ENCODE measurements at regions of chr3 and their contacts with region 1.

Region 1: GRCh38 chr3:32570421-32571191 is at the start of gene DYNC1LI1:
- DNase-seq: peak; percentile 96
- H3K4me3 Mint-ChIP-seq: peak within 1 kb of the TSS; percentile 89
- H3K27ac Mint-ChIP-seq: peak within 1 kb of the TSS; percentile 90
- H3K4me1 Mint-ChIP-seq: peaks cover 27% of the 10 kb centered on the region
- H3K27me3 Mint-ChIP-seq: no peaks in the 10 kb centered on the region
- total RNA-seq, gene DYNC1LI1: 35.2 to 36.3 TPM

Region 2: GRCh38 chr3:32414520-32415202 is 155.9 kb before region 1 on chr3:
- CTCF ChIA-PET with region 1: no interaction called
- POLR2A ChIA-PET with region 1: no interaction called
- intact Hi-C with region 1: no loop called
- DNase-seq: peak; percentile 68
- H3K4me3 Mint-ChIP-seq: peak overlapping the region; percentile 49
- H3K27ac Mint-ChIP-seq: peak overlapping the region; percentile 94
- H3K4me1 Mint-ChIP-seq: peaks cover 65% of the 10 kb centered on the region
- H3K27me3 Mint-ChIP-seq: no peaks in the 10 kb centered on the region

Region 3: DNA sequence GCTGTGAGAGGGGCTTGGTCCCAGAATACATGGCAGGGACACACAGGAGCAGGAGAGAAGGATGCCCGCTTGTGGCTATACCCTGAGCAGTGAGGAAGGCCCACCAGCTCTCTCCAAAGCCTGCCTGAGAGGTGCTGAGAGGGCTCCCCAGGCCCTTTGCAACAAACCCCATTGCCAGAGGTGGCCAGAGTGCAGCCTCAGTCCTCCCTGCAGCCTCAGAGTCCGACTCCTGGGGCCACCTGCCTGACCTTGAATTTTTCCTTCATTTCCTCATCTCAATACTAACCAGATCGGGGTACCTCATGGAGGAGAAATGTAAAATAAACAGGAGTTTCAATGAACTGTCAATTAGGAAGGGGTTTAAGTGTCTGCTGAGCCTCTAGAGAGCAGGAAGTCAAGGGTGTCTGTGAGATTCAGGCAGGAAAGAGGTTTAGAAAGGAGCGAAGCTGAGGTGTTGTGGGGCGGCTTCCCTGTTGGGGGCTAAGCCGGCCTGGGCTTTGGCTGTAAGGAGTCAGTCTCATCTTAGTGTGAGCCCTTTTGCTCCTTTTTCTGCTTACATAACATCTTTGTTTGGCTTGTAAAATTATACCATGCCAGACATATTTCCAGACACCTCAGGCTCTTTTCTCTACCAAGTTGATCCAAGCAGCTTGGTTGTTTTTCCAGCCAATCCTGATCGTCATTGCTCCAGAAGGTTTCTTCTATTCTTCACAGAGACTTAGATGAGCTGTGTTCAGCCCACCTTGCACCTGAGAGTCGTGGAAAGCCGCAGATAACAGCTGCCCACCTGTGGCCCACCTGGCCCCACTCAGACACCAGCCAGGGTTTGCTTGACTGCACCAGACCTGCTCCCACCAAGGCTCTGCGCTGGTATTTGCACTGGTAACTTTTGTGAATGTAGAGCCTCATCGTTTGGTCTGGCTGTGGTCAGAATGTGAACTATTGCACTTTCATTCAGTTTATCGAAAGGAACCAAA is 142.2 kb before region 1 on chr3:
- CTCF ChIA-PET with region 1: no interaction called
- POLR2A ChIA-PET with region 1: no interaction called
- intact Hi-C with region 1: no loop called
- DNase-seq: peak; percentile 41
- H3K4me3 Mint-ChIP-seq: peak overlapping the region; percentile 57
- H3K27ac Mint-ChIP-seq: peak overlapping the region; percentile 84
- H3K4me1 Mint-ChIP-seq: peaks cover 93% of the 10 kb centered on the region
- H3K27me3 Mint-ChIP-seq: no peaks in the 10 kb centered on the region

Region 4: GRCh38 chr3:32502118-32502945 is 68.3 kb before region 1 on chr3 and contains the start of gene CMTM6:
- CTCF ChIA-PET with region 1: interaction called, 3 read pairs
- POLR2A ChIA-PET with region 1: interaction called, 4 read pairs
- intact Hi-C with region 1: loop called (anchors 2 kb)
- DNase-seq: peak; percentile 84
- H3K4me3 Mint-ChIP-seq: peak within 1 kb of the TSS; percentile 100
- H3K27ac Mint-ChIP-seq: peak within 1 kb of the TSS; percentile 97
- H3K4me1 Mint-ChIP-seq: peaks cover 32% of the 10 kb centered on the region
- H3K27me3 Mint-ChIP-seq: no peaks in the 10 kb centered on the region
- total RNA-seq, gene CMTM6: 87.7 to 89.1 TPM